Common myeloid progenitor, CD34-positive (primary cell): ENCODE measurements at regions of chr5 and their contacts with region 1.

Region 1: DNA sequence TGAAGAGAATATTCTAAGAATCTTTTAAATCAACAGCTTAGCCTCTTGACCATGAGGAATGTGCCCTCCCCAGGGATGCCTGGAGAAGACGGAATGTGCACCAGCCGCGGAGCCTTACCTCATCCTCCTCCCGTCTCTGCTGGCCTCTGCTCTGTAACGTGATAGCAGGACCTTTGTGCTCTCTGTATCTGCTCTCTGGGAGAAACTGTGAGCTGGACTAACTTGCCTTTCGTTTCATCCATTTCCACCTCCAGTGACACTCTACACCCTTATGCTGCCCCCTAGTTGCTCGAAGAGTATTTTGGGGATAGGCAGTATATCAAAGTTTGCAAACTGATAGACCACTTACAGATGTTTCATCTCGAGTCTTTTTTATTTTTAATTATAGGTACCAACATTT is 141.4 kb downstream of the NPR3 start:
- DNase-seq: peak; percentile 64 to 77 (median 75)
- H3K4me3 ChIP-seq: peak overlapping the region in 4 of 7 experiments; percentile 25 to 68 (median 38)
- H3K27ac ChIP-seq: no peak overlapping the region
- H3K4me1 ChIP-seq: peaks cover 0 to 25% (median 6%) of the 10 kb centered on the region in 4 experiments
- H3K27me3 ChIP-seq: no peaks in the 10 kb centered on the region

Region 2: DNA sequence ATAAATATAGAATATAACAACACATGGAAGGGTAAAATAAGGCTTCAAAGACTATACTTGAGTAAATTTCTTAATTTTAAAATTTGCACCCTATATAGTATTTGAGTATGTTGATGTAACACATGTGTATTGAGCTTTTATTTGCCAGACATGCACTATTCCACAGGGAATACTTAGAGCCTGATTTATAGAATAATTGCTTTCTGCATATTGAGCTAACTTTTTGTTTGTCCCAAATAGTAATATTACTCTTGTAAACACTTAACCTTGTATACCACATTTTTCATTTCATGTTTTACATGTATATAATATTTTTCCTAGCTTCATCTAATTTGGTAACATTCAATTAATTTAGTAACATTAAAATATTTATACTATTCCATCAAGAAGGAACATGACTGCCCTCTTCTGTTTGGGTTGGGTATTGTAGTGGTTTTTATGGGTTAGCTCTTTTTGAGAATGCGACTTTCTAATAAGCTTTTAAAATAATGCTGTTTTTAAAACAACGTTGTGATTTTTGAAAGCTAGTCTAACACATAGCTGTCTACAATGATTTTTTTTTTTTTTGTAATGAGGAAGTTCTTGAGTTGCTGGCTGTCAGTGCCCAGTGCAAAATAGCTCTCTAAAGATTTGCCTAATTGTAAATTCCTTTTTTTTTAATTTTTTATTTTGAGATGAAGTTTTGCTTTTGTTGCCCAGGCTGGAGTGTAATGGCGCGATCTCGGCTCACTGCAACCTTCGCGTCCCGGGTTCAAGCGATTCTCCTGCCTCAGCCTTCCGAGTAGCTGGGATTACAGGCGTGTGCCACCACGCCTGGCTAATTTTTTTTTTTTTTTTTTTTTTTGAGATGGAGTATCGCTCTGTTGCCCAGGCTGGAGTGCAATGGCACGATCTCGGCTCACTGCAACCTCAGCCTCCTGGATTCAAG is 262.3 kb before region 1 on chr5:
- CTCF ChIA-PET with region 1: no interaction called
- POLR2A ChIA-PET with region 1: no interaction called
- DNase-seq: peak; percentile 83 to 92 (median 87)
- H3K4me3 ChIP-seq: no peak overlapping the region
- H3K27ac ChIP-seq: no peak overlapping the region
- H3K4me1 ChIP-seq: peaks cover 11 to 30% (median 21%) of the 10 kb centered on the region in 4 experiments
- H3K27me3 ChIP-seq: no peaks in the 10 kb centered on the region

Region 3: GRCh38 chr5:32753765-32754164 is 98.8 kb before region 1 on chr5:
- CTCF ChIA-PET with region 1: interaction called, 16 read pairs
- POLR2A ChIA-PET with region 1: no interaction called
- DNase-seq: peak in 2 of 3 donors; percentile 33 to 48
- H3K4me3 ChIP-seq: no peak overlapping the region
- H3K27ac ChIP-seq: no peak overlapping the region
- H3K4me1 ChIP-seq: peaks cover 7 to 23% (median 9%) of the 10 kb centered on the region in 4 experiments
- H3K27me3 ChIP-seq: no peaks in the 10 kb centered on the region

Region 4: DNA sequence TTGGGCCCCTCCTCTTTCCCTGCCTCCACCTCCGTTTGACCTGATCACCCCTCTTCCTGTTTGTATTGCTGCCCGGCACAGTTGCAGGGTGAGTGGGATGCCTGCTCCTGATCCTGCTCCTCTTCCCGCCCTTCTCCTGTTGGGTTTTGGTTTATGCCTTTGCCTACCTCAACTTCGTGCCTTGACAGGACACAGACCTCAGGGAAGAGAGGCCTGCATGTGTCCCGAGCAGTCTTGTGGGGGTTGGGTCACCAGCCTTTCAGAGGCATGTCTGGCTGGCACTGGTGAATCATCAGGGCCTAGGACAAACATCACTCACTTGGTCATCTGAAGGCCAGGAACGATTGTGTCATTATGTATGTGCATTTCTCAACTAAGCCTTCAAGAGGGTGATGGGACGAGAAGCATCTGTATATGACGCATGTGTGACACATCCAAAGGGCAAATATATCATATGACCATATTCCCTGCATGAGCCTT is 84.5 kb before region 1 on chr5:
- CTCF ChIA-PET with region 1: interaction called, 10 read pairs
- POLR2A ChIA-PET with region 1: interaction called, 3 read pairs
- DNase-seq: no peak
- H3K4me3 ChIP-seq: no peak overlapping the region
- H3K27ac ChIP-seq: peak overlapping the region in 1 of 2 experiments; percentile 17
- H3K4me1 ChIP-seq: peaks cover 2 to 30% (median 12%) of the 10 kb centered on the region in 4 experiments
- H3K27me3 ChIP-seq: no peaks in the 10 kb centered on the region

Region 5: GRCh38 chr5:32810804-32811203 is 41.7 kb before region 1 on chr5:
- CTCF ChIA-PET with region 1: interaction called, 17 read pairs
- POLR2A ChIA-PET with region 1: no interaction called
- DNase-seq: no peak
- H3K4me3 ChIP-seq: no peak overlapping the region
- H3K27ac ChIP-seq: no peak overlapping the region
- H3K4me1 ChIP-seq: no peaks in the 10 kb centered on the region
- H3K27me3 ChIP-seq: no peaks in the 10 kb centered on the region